CD4-positive, alpha-beta T cell (primary cell): ENCODE measurements at regions of chr11 and their contacts with region 1.

Region 1: GRCh38 chr11:45102810-45103621 is 43.4 kb upstream of the PRDM11 start:
- DNase-seq: peak; percentile 25 to 84 (median 53)
- ATAC-seq: peak; percentile 80
- H3K4me3 ChIP-seq: no peak overlapping the region
- H3K4me3 Mint-ChIP-seq: no peak overlapping the region
- H3K27ac ChIP-seq: no peak overlapping the region
- H3K27ac Mint-ChIP-seq: no peak overlapping the region
- H3K4me1 ChIP-seq: peaks cover 31% of the 10 kb centered on the region
- H3K4me1 Mint-ChIP-seq: peaks cover 21% of the 10 kb centered on the region
- H3K27me3 ChIP-seq: no peaks in the 10 kb centered on the region
- H3K27me3 Mint-ChIP-seq: peaks cover 5% of the 10 kb centered on the region
- CTCF ChIP-seq: peak; percentile 98

Region 2: GRCh38 chr11:44645827-44646226 is 457.2 kb before region 1 on chr11:
- CTCF ChIA-PET with region 1: no interaction called
- POLR2A ChIA-PET with region 1: no interaction called
- intact Hi-C with region 1: loop called in 1 of 2 experiments (anchors 10 kb)
- DNase-seq: no peak
- ATAC-seq: no peak
- H3K4me3 ChIP-seq: no peak overlapping the region
- H3K4me3 Mint-ChIP-seq: no peak overlapping the region
- H3K27ac ChIP-seq: no peak overlapping the region
- H3K27ac Mint-ChIP-seq: no peak overlapping the region
- H3K4me1 ChIP-seq: no peaks in the 10 kb centered on the region
- H3K4me1 Mint-ChIP-seq: no peaks in the 10 kb centered on the region
- H3K27me3 ChIP-seq: peaks cover 0 to 4% of the 10 kb centered on the region in 2 experiments
- H3K27me3 Mint-ChIP-seq: peaks cover 37% of the 10 kb centered on the region
- CTCF ChIP-seq: no peak

Region 3: GRCh38 chr11:44927174-44927661 is 175.8 kb before region 1 on chr11:
- CTCF ChIA-PET with region 1: interaction called, 33 read pairs
- POLR2A ChIA-PET with region 1: interaction called, 4 read pairs
- intact Hi-C with region 1: loop called (anchors 2 kb)
- DNase-seq: peak; percentile 34 to 78 (median 50)
- ATAC-seq: peak; percentile 55
- H3K4me3 ChIP-seq: no peak overlapping the region
- H3K4me3 Mint-ChIP-seq: no peak overlapping the region
- H3K27ac ChIP-seq: no peak overlapping the region
- H3K27ac Mint-ChIP-seq: no peak overlapping the region
- H3K4me1 ChIP-seq: no peaks in the 10 kb centered on the region
- H3K4me1 Mint-ChIP-seq: no peaks in the 10 kb centered on the region
- H3K27me3 ChIP-seq: no peaks in the 10 kb centered on the region
- H3K27me3 Mint-ChIP-seq: no peaks in the 10 kb centered on the region
- CTCF ChIP-seq: peak; percentile 81

Region 4: GRCh38 chr11:44936525-44936924 is 166.5 kb before region 1 on chr11:
- CTCF ChIA-PET with region 1: interaction called, 103 read pairs
- POLR2A ChIA-PET with region 1: interaction called, 13 read pairs
- intact Hi-C with region 1: loop called (anchors 1 kb)
- DNase-seq: peak; percentile 66 to 90 (median 82)
- ATAC-seq: peak; percentile 90
- H3K4me3 ChIP-seq: no peak overlapping the region
- H3K4me3 Mint-ChIP-seq: no peak overlapping the region
- H3K27ac ChIP-seq: no peak overlapping the region
- H3K27ac Mint-ChIP-seq: no peak overlapping the region
- H3K4me1 ChIP-seq: peaks cover 5% of the 10 kb centered on the region
- H3K4me1 Mint-ChIP-seq: no peaks in the 10 kb centered on the region
- H3K27me3 ChIP-seq: no peaks in the 10 kb centered on the region
- H3K27me3 Mint-ChIP-seq: no peaks in the 10 kb centered on the region
- CTCF ChIP-seq: peak; percentile 87

Region 5: DNA sequence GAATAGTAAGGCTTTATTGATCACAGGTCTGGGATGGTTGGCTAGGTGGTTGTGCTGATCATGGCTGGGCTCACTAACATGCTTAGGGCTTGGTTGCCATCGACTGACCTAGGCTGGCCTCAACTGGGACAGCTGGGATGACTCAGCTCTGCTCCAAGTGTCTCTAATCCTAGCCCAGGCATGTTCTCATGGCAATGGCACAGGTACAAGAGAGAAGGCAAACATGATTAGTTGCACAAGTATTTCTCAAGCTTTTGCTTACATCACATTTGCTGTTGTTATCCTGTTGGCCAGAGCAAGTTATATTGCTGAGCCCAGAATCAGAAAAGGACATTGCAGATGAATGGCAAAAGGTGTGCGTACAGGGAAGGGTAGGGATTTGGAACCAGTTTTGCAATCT is 633.4 kb after region 1 on chr11:
- CTCF ChIA-PET with region 1: no interaction called
- POLR2A ChIA-PET with region 1: no interaction called
- intact Hi-C with region 1: no loop called
- DNase-seq: no peak
- ATAC-seq: no peak
- H3K4me3 ChIP-seq: no peak overlapping the region
- H3K4me3 Mint-ChIP-seq: no peak overlapping the region
- H3K27ac ChIP-seq: no peak overlapping the region
- H3K27ac Mint-ChIP-seq: no peak overlapping the region
- H3K4me1 ChIP-seq: no peaks in the 10 kb centered on the region
- H3K4me1 Mint-ChIP-seq: no peaks in the 10 kb centered on the region
- H3K27me3 ChIP-seq: peaks cover 0 to 4% of the 10 kb centered on the region in 2 experiments
- H3K27me3 Mint-ChIP-seq: peaks cover 7% of the 10 kb centered on the region
- CTCF ChIP-seq: no peak